H1 (cell line): ENCODE measurements at regions of chr1 and their contacts with region 1.

Region 1: GRCh38 chr1:43317817-43318471 is 17.2 kb downstream of the TIE1 start:
- DNase-seq: no peak
- H3K4me3 ChIP-seq: no peak overlapping the region
- H3K27ac ChIP-seq: no peak overlapping the region
- H3K4me1 ChIP-seq: peaks cover 0 to 5% (median 0%) of the 10 kb centered on the region in 4 experiments; a peak in 1 of 7 replicates
- H3K27me3 ChIP-seq: no peaks in the 10 kb centered on the region; a peak in 1 of 7 replicates
- CTCF ChIP-seq: no peak
- EP300 ChIP-seq: no peak
- POLR2A ChIP-seq: no peak
- RAD21 ChIP-seq: no peak

Region 2: DNA sequence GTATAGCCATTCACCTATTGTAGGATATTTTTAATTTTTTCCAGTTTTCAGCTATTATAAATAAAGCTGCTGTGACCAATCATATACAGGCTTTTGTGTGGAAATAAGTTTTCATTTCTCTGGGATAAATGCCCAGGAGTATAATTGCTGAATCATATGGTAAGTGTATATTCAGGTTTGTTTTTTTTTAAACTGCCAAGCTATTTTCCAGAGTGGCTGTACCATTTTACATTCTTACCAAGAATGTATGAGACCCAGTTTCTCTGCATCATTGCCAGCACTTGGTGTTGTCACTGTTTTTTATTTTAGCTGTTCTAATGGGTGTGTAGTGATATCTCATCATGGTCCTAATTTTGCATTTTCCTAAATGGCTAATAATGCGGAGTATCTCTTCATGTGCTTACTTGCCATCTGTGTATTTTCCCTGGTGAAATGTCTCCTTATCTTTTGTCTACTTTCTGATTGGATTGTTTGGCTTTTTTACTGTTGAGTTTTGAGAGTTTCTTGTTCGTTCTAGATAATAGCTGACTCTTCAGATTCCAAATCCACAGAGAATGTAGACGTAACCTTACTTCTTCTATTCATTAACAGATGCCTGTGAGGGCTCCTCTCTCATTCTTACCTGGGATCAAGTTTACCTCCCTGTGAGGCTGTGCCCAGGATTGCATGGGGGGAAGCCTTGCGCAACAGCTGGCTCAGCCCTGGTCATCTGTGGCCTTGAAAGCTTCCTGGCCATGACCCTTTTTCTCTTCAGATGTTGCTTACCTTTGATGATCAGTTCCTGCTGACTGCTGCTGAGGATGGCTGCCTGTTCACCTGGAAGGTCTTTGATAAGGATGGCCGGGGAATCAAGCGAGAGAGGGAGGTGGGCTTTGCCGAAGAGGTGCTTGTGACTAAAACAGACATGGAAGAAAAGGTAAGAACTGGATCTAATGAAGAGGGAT is 103.2 kb before region 1 on chr1:
- CTCF ChIA-PET with region 1: no interaction called
- POLR2A ChIA-PET with region 1: no interaction called
- DNase-seq: no peak
- H3K4me3 ChIP-seq: no peak overlapping the region
- H3K27ac ChIP-seq: no peak overlapping the region
- H3K4me1 ChIP-seq: no peaks in the 10 kb centered on the region; a peak in 1 of 7 replicates
- H3K27me3 ChIP-seq: no peaks in the 10 kb centered on the region
- CTCF ChIP-seq: no peak
- EP300 ChIP-seq: no peak
- POLR2A ChIP-seq: no peak
- RAD21 ChIP-seq: no peak

Region 3: GRCh38 chr1:43329995-43330751 is 12.2 kb after region 1 on chr1:
- CTCF ChIA-PET with region 1: interaction called, 13 read pairs
- POLR2A ChIA-PET with region 1: no interaction called
- DNase-seq: no peak
- H3K4me3 ChIP-seq: no peak overlapping the region
- H3K27ac ChIP-seq: no peak overlapping the region
- H3K4me1 ChIP-seq: peaks cover 0 to 8% (median 3%) of the 10 kb centered on the region in 4 experiments; a peak in 3 of 7 replicates
- H3K27me3 ChIP-seq: no peaks in the 10 kb centered on the region
- CTCF ChIP-seq: no peak
- EP300 ChIP-seq: no peak
- POLR2A ChIP-seq: no peak
- RAD21 ChIP-seq: no peak